PC-3 (cell line): ENCODE measurements at regions of chr2 and their contacts with region 1.

Region 1: DNA sequence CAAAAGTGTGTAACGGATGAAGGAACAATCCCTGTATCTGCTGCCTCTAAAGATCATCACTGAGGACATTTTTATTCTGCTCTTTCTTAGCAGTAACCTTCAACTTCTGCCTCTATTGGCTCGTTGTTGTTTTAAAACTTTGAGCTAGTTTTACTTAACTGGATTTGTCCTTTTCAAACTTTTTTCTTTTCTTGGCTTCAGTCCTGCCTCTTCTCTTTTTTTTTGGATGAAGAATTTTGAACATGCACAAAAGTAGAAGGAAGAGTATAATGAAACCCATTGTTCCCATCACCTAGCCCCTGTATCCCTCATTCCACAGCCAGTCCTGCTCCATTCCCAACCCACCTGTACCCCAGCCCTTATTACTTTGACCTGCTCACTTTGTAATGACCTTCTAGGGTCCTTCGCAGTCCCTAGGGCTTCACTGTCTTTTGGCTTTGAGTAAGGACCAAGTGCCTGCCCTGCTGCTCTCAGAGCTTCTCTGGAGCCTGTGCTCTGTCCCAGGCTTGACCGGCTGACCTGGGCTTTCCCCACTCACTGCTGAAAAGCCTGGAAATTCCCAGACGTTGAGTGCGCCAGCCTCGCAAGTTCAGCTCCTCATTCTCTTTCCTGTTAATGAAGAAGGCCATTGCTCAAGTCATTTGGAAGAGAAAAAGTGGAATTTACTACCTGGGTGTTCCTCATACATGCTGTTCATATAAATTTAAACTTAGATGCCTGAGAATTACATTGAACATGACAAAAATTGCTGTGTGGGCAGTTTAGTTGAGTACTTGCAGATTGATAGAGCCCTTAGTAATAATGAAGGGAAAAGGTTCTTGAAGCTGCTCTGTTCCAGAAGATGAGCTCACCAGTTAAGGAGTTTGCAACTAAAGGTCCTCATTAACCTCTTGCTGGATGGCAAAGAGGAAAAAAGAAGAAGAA is 149.3 kb upstream of the ALPP start:
- DNase-seq: no peak
- ATAC-seq: no peak
- H3K4me3 ChIP-seq: no peak overlapping the region
- H3K27ac ChIP-seq: no peak overlapping the region
- H3K4me1 ChIP-seq: no peaks in the 10 kb centered on the region
- H3K27me3 ChIP-seq: no peaks in the 10 kb centered on the region
- CTCF ChIP-seq: no peak

Region 2: GRCh38 chr2:231573698-231574421 is 655.4 kb before region 1 on chr2:
- CTCF ChIA-PET with region 1: no interaction called
- POLR2A ChIA-PET with region 1: interaction called, 12 read pairs
- intact Hi-C with region 1: no loop called
- DNase-seq: no peak
- ATAC-seq: no peak
- H3K4me3 ChIP-seq: no peak overlapping the region
- H3K27ac ChIP-seq: no peak overlapping the region
- H3K4me1 ChIP-seq: no peaks in the 10 kb centered on the region
- H3K27me3 ChIP-seq: no peaks in the 10 kb centered on the region
- CTCF ChIP-seq: no peak